Aorta (tissue), 5 donors: ENCODE measurements at regions of chr1 and their contacts with region 1.

Region 1: GRCh38 chr1:153990468-153991150 is at the start of gene RPS27:
- DNase-seq: peak; percentile 89 to 94
- ATAC-seq: peak; percentile 88
- H3K4me3 ChIP-seq: peak within 1 kb of the TSS; percentile 94 to 98
- H3K27ac ChIP-seq: peak within 1 kb of the TSS in 1 of 2 donors; percentile 75
- H3K4me1 ChIP-seq: peaks cover 2 to 10% of the 10 kb centered on the region in 2 donors
- H3K27me3 ChIP-seq: no peaks in the 10 kb centered on the region
- total RNA-seq, gene RPS27: 1,406 to 1,521 TPM

Region 2: GRCh38 chr1:153352523-153352922 is 638.1 kb before region 1 on chr1:
- intact Hi-C with region 1: loop called in 1 of 2 experiments (anchors 10 kb)
- DNase-seq: peak; percentile 79 to 85
- ATAC-seq: peak; percentile 83
- H3K4me3 ChIP-seq: no peak overlapping the region
- H3K27ac ChIP-seq: no peak overlapping the region
- H3K4me1 ChIP-seq: no peaks in the 10 kb centered on the region
- H3K27me3 ChIP-seq: no peaks in the 10 kb centered on the region

Region 3: DNA sequence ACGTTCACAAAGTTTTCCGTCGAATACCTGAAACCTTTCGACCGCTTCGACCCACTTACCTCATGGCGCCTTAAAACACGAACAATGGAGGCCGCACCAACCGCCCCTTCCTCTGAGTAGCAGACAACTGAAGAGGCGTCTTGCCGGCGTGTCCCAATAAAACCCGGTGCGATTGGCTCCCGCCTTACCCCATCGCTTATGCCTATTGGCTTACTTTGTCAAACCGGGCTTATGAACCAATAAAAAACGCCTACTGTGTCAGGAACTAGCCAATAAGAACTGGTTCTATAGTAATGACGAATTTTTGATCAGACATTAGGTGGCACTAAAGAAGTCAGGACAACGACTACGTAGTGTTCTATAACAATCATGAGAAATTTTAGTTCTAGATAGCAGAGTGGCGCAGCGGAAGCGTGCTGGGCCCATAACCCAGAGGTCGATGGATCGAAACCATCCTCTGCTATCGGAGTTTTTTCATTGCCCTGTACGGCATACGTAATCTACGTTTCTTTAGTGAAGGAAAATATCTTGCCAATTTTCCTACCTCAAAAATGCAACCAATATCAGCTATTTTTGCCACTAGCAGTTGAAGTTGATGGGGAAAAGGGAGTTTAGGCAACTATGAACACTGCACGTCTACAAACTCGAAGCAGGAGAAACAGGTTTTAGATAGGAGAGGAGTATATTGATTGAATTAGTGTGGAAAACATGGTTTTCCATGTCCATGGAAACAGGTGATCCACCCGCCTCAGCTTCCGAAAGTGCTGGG is 319.6 kb before region 1 on chr1 and contains the start of gene ILF2:
- intact Hi-C with region 1: loop called (anchors 5 kb)
- DNase-seq: peak; percentile 99
- ATAC-seq: peak; percentile 96
- H3K4me3 ChIP-seq: peak within 1 kb of the TSS; percentile 74 to 82
- H3K27ac ChIP-seq: peak within 1 kb of the TSS; percentile 22 to 87
- H3K4me1 ChIP-seq: no peaks in the 10 kb centered on the region
- H3K27me3 ChIP-seq: no peaks in the 10 kb centered on the region
- total RNA-seq, gene ILF2: 70.6 to 82.9 TPM

Region 4: DNA sequence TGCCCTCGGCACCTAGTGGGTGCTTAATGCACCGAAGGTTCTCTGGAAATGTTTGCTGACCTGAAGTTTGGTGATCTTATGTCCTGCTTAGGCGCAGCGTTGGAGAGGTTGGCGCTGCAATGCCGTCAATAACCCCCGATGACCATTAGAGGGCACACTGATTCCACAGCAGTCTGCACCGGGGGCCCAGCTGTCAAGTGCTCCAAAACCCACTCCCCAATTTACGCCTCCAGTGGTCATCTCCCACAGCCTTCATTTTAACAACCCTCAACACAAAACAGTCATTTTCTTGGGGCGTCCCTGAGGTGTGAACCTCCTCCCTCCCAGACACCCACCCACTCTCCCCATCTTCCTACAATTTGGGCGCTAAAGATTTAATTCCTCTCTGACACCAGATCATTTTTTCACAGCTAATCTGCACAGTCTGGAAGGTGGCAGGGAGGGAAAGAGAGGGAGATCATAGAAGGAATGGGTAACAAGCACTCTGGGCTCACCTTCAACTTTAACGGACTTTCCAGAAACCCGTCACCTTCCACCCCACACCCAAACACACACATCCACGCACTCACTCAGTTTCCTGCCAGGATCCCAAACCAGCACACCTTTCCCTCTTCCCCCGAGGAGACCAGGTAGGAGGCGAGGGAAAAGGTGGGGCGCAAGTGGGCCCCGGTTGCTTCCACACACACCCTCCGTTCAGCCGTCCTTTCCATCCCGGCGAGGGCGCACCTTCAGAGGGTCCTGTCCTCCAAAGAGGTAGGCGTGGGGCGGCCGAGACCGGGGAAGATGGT is 312.7 kb before region 1 on chr1:
- intact Hi-C with region 1: loop called (anchors 5 kb)
- DNase-seq: peak; percentile 66 to 79
- ATAC-seq: peak; percentile 81
- H3K4me3 ChIP-seq: peak overlapping the region; percentile 30 to 79
- H3K27ac ChIP-seq: peak overlapping the region in 1 of 2 donors; percentile 63
- H3K4me1 ChIP-seq: no peaks in the 10 kb centered on the region
- H3K27me3 ChIP-seq: no peaks in the 10 kb centered on the region

Region 5: GRCh38 chr1:153796791-153797659 is 193.6 kb before region 1 on chr1:
- intact Hi-C with region 1: loop called (anchors 2 to 5 kb)
- DNase-seq: peak; percentile 83 to 87
- ATAC-seq: peak; percentile 71
- H3K4me3 ChIP-seq: no peak overlapping the region
- H3K27ac ChIP-seq: no peak overlapping the region
- H3K4me1 ChIP-seq: no peaks in the 10 kb centered on the region
- H3K27me3 ChIP-seq: no peaks in the 10 kb centered on the region

Region 6: GRCh38 chr1:153922972-153923925 is 67.4 kb before region 1 on chr1 and contains the start of gene GATAD2B:
- intact Hi-C with region 1: loop called (anchors 2 to 10 kb)
- DNase-seq: peak; percentile 100
- ATAC-seq: peak; percentile 98
- H3K4me3 ChIP-seq: peak within 1 kb of the TSS; percentile 82 to 91
- H3K27ac ChIP-seq: peak within 1 kb of the TSS; percentile 72 to 77
- H3K4me1 ChIP-seq: peaks cover 0 to 4% of the 10 kb centered on the region in 2 donors
- H3K27me3 ChIP-seq: no peaks in the 10 kb centered on the region
- total RNA-seq, gene GATAD2B: 52.3 to 67.8 TPM

Region 7: GRCh38 chr1:154253671-154254070 is 263.1 kb after region 1 on chr1:
- intact Hi-C with region 1: no loop called
- DNase-seq: no peak
- ATAC-seq: no peak
- H3K4me3 ChIP-seq: no peak overlapping the region
- H3K27ac ChIP-seq: no peak overlapping the region
- H3K4me1 ChIP-seq: no peaks in the 10 kb centered on the region
- H3K27me3 ChIP-seq: no peaks in the 10 kb centered on the region

Region 8: DNA sequence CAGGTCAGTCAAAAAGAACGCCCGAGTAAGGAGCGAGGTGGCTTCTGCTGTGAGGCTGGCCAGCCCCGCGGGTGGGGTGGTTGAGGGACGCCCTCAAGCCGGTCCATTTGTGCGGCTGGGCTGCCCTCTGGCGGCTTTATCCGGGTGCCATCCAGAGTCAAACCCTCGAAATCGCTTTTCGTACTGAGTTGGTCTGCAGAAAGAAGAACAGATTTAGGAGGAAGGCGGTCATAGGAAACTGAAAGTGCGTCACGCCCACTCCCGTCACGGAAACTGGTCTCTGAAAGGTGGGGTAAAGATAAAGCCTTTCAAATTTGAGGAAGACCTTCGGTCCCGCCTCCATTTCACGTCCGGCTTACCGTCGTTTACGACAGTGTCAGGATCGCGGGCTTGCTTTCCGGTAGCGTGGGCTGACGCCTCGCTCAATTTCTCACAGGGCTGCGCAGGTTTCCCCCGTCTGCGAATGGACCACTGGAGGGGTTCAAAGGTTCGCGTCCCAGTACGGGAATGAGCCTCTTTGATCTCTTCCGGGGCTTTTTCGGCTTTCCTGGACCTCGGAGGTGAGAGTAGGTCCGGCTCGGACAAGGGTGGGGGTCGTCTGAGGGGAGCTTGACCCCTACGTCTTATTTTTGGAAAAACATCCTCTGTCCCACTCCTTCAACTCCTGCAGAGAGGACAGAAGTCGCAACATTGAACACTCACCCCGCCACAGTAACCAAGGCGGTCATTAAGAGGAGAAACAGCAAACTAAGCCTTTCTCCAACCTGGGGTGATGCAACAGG is 281.8 kb after region 1 on chr1 and contains the start of gene HAX1:
- intact Hi-C with region 1: loop called in 1 of 2 experiments (anchors 5 kb)
- DNase-seq: peak; percentile 97 to 98
- ATAC-seq: peak; percentile 97
- H3K4me3 ChIP-seq: peak within 1 kb of the TSS; percentile 74 to 79
- H3K27ac ChIP-seq: peak within 1 kb of the TSS; percentile 57 to 58
- H3K4me1 ChIP-seq: no peaks in the 10 kb centered on the region
- H3K27me3 ChIP-seq: no peaks in the 10 kb centered on the region
- total RNA-seq, gene HAX1: 52.2 to 57.1 TPM